Sigmoid colon (tissue), 7 donors: ENCODE measurements at regions of chr7 and their contacts with region 1.

Region 1: GRCh38 chr7:77536413-77537135 is 521 bp upstream of the PTPN12 start:
- DNase-seq: peak; percentile 98
- H3K4me3 ChIP-seq: peak overlapping the region; percentile 65 to 95 (median 80)
- H3K27ac ChIP-seq: peak overlapping the region; percentile 93 to 98 (median 96)
- H3K4me1 ChIP-seq: peaks cover 0 to 33% (median 25%) of the 10 kb centered on the region in 4 donors
- H3K27me3 ChIP-seq: no peaks in the 10 kb centered on the region
- CTCF ChIP-seq: no peak
- EP300 ChIP-seq: no peak
- POLR2A ChIP-seq: peak; percentile 86 to 96

Region 2: DNA sequence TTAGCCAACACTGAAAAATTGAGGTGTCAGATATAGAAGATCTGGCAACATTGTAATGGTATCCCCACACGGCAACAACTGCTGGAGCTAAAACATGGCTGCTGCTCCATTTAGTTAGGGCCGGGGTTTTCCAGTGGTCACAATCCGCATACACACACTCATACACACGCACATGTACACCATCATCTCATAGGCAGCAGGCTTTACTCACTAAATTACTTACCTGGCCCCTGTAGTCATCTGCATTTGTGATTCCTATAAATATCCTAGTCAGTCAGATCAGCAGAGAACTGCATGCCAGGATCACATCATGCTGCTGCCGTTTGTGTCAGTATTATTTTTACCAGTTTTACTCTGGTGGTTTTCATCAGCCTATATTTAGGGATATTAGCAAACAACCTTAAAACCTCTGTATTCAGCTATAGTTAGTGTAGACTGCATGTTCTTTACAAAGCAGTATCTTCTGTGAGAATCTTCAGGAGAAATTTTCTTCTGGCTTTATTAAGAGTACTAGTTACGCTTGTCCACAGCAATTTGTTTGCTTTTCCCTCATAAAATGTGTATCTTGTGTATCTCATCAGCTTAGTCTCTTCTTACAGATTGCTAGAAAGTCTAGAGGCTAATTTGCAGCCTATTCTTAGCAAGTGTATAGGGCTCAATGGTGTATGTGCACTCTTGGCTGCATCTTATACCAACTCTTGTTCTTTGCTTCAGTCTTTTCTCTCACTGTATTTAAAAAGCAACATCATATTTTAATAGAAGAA is 37.7 kb before region 1 on chr7:
- intact Hi-C with region 1: no loop called
- DNase-seq: no peak
- H3K4me3 ChIP-seq: no peak overlapping the region
- H3K27ac ChIP-seq: no peak overlapping the region
- H3K4me1 ChIP-seq: no peaks in the 10 kb centered on the region
- H3K27me3 ChIP-seq: no peaks in the 10 kb centered on the region
- CTCF ChIP-seq: no peak
- EP300 ChIP-seq: no peak
- POLR2A ChIP-seq: no peak

Region 3: GRCh38 chr7:77696198-77697028 is 159.8 kb after region 1 on chr7 and contains the start of gene RSBN1L:
- intact Hi-C with region 1: loop called (anchors 5 kb)
- DNase-seq: peak; percentile 99
- H3K4me3 ChIP-seq: peak within 1 kb of the TSS; percentile 76 to 90 (median 89)
- H3K27ac ChIP-seq: peak within 1 kb of the TSS; percentile 96 to 100 (median 96)
- H3K4me1 ChIP-seq: peaks cover 0 to 63% (median 44%) of the 10 kb centered on the region in 4 donors
- H3K27me3 ChIP-seq: no peaks in the 10 kb centered on the region
- CTCF ChIP-seq: peak in 3 of 4 experiments; percentile 18 to 39 (median 26)
- EP300 ChIP-seq: no peak
- POLR2A ChIP-seq: peak; percentile 68 to 89
- total RNA-seq, gene RSBN1L: 29.3 to 50.4 (median 40.7) TPM